ENCODE measurements at regions of chr15 and their contacts with region 1.

Region 1: GRCh38 chr15:51649659-51650521 is 27.3 kb upstream of the DMXL2 start:
- DNase-seq: peak; percentile 71
- H3K4me3 ChIP-seq: peak overlapping the region in 1 of 2 experiments; percentile 18; a peak in 1 of 4 replicates
- H3K27ac ChIP-seq: no peak overlapping the region
- H3K4me1 ChIP-seq: peaks cover 0 to 2% of the 10 kb centered on the region in 2 experiments; a peak in 2 of 4 replicates
- H3K27me3 ChIP-seq: no peaks in the 10 kb centered on the region
- CTCF ChIP-seq: peak; percentile 88
- EP300 ChIP-seq: no peak
- RAD21 ChIP-seq: peak; percentile 99

Region 2: GRCh38 chr15:51667478-51667877 is 17.6 kb after region 1 on chr15:
- CTCF ChIA-PET with region 1: interaction called, 13 read pairs
- POLR2A ChIA-PET with region 1: no interaction called
- DNase-seq: peak; percentile 34
- H3K4me3 ChIP-seq: no peak overlapping the region
- H3K27ac ChIP-seq: peak overlapping the region in 1 of 2 experiments; percentile 29; a peak in 1 of 4 replicates
- H3K4me1 ChIP-seq: peaks cover 0 to 3% of the 10 kb centered on the region in 2 experiments; a peak in 1 of 4 replicates
- H3K27me3 ChIP-seq: no peaks in the 10 kb centered on the region; the same call in 1 of the 2 replicates
- CTCF ChIP-seq: no peak
- EP300 ChIP-seq: peak in 1 of 2 experiments; percentile 76; a peak in 2 of 4 replicates
- RAD21 ChIP-seq: no peak

Region 3: GRCh38 chr15:51726351-51727073 is 76.6 kb after region 1 on chr15:
- CTCF ChIA-PET with region 1: interaction called, 10 read pairs
- POLR2A ChIA-PET with region 1: no interaction called
- DNase-seq: peak; percentile 77
- H3K4me3 ChIP-seq: peak overlapping the region in 1 of 2 experiments; percentile 24; a peak in 1 of 4 replicates
- H3K27ac ChIP-seq: peak overlapping the region; percentile 82 to 91
- H3K4me1 ChIP-seq: peaks cover 30 to 34% of the 10 kb centered on the region in 2 experiments
- H3K27me3 ChIP-seq: no peaks in the 10 kb centered on the region
- CTCF ChIP-seq: no peak
- EP300 ChIP-seq: peak; percentile 89
- RAD21 ChIP-seq: no peak; the same call in 1 of the 2 replicates

Region 4: DNA sequence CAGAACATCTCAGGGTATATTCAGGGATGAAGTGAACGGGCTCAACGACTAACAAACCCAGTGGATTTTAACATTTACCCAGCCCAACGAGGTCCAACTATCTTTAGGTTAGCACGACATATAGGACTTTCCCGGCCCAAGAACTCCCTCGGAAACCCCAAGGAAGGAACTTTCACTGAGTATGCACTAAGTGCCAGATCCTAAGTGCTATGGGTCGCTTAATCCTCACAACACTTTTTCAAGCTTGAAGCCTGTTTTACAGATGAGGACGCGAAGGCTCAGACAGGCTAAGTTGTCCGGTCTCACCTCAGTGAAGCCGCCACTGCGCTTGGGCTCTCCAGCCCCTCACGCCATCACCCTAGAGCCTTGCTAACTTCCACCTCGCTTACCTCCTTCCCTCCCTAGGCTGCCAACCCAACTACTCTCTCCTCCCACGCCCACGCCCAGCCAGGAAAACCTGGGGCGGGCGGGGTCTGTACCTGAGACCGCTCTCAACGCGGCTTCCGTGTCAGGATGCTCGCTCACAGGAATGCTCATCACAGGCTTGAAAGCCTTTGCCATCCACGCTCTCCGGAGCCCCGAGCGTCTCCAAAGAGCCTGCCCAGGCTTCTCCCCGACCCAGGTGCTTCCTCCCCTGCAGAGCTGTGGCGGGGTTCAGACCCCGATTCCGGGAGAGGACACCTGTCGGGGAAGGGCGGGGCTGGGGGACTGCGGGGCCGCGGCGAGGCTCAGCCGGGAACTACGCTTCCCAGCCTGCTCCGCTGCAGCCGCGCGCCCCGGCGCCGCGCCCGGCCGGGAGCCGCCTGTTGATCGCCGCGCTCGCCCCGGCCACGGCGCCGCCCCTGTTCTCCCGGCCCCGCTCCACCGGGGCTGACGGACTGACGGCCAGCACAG is 101.1 kb after region 1 on chr15 and contains the start of gene TMOD2:
- CTCF ChIA-PET with region 1: interaction called, 11 read pairs
- POLR2A ChIA-PET with region 1: no interaction called
- DNase-seq: peak; percentile 89
- H3K4me3 ChIP-seq: peak within 1 kb of the TSS; percentile 78 to 81
- H3K27ac ChIP-seq: peak within 1 kb of the TSS in 1 of 2 experiments; percentile 60; a peak in 2 of 4 replicates
- H3K4me1 ChIP-seq: peaks cover 4 to 5% of the 10 kb centered on the region in 2 experiments; a peak in 2 of 4 replicates
- H3K27me3 ChIP-seq: no peaks in the 10 kb centered on the region; the same call in 1 of the 2 replicates
- CTCF ChIP-seq: no peak
- EP300 ChIP-seq: no peak
- RAD21 ChIP-seq: no peak
- polyA plus RNA-seq, gene TMOD2: 2.7 and 4.4 TPM in 2 replicates

Region 5: GRCh38 chr15:51768018-51768417 is 118.1 kb after region 1 on chr15:
- CTCF ChIA-PET with region 1: interaction called, 313 read pairs
- POLR2A ChIA-PET with region 1: no interaction called
- DNase-seq: no peak
- H3K4me3 ChIP-seq: no peak overlapping the region
- H3K27ac ChIP-seq: no peak overlapping the region
- H3K4me1 ChIP-seq: peaks cover 0 to 3% of the 10 kb centered on the region in 2 experiments; a peak in 1 of 4 replicates
- H3K27me3 ChIP-seq: no peaks in the 10 kb centered on the region
- CTCF ChIP-seq: no peak
- EP300 ChIP-seq: no peak
- RAD21 ChIP-seq: no peak

Measured in SK-N-SH (cell line).